ENCODE measurements at regions of chr2 and their contacts with region 1.

Region 1: DNA sequence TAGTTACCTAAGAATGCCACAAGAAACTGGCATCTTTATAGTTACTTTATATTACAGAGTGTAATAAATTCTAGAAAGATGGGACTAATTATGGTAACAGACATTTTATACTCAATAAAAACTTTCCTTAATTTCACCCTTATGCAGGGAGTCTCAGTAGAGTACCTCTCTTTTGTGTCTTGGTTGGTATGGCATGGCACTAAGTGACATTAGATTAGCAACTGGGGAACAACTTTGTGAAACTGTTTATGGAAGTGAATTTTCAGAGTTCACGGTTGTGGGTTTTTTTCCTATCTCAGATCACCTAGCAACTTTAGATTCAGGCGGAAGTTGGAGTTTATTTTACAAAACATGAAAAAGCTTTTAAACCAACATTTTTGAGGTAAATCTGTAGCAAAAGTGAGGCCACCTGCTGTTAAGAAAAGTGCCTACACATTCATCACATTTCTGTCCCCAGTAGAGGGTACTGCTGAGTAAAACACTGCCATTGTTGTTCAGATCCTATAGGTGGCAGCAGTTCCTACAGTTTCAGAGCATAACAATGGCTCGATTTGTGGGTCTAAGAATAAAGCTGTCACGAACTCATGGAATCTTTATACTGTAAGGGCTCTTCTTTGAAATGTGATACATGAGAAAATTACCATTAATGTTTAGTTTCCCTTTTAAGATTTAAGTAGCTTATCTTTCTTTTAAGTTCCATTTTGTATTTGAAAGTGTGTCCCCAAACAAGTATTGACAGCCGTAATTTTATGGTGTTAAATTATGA is 117.6 kb downstream of the CAMKMT start:
- DNase-seq: peak; percentile 86
- H3K4me3 Mint-ChIP-seq: no peak overlapping the region
- H3K27ac Mint-ChIP-seq: no peak overlapping the region
- H3K4me1 Mint-ChIP-seq: no peaks in the 10 kb centered on the region
- H3K27me3 Mint-ChIP-seq: no peaks in the 10 kb centered on the region
- CTCF ChIP-seq: peak; percentile 99

Region 2: DNA sequence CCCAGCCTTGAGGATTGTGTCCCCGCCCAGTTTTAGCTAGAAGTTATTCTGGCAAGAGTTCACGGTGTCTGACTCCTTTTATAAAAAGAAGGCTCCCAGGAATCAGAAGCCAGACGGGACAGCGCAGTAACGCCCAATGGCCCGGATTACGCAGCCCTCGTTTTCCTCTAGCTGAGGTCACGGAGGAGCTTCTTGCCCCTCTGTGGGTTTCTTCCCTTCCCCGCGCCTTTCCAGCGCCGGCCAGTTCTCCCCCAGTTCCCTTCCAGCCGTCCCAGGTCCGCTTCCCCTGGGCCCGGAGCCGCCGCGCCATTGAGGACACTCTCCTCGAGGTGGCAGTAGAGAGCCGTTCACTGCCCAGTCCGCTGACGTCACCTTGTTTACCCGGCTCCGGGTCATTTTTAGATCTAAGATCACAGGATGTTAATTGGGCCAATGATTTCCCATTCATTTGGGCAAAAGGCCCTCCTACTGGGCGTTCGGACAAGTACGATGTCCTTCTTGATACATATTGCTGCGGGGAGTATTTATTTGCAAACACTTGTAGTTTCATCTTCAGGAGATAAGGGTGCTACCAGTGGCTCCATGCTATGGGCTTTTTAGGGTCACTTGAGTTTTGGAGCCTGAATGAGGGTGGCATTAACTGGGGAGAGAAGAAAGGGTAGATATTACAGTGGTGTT is 392.1 kb before region 1 on chr2:
- CTCF ChIA-PET with region 1: interaction called, 4 read pairs
- POLR2A ChIA-PET with region 1: no interaction called
- intact Hi-C with region 1: loop called (anchors 2 kb)
- DNase-seq: peak; percentile 78
- H3K4me3 Mint-ChIP-seq: peak overlapping the region; percentile 61
- H3K27ac Mint-ChIP-seq: peak overlapping the region; percentile 46
- H3K4me1 Mint-ChIP-seq: peaks cover 5% of the 10 kb centered on the region
- H3K27me3 Mint-ChIP-seq: no peaks in the 10 kb centered on the region
- CTCF ChIP-seq: peak; percentile 89

Region 3: DNA sequence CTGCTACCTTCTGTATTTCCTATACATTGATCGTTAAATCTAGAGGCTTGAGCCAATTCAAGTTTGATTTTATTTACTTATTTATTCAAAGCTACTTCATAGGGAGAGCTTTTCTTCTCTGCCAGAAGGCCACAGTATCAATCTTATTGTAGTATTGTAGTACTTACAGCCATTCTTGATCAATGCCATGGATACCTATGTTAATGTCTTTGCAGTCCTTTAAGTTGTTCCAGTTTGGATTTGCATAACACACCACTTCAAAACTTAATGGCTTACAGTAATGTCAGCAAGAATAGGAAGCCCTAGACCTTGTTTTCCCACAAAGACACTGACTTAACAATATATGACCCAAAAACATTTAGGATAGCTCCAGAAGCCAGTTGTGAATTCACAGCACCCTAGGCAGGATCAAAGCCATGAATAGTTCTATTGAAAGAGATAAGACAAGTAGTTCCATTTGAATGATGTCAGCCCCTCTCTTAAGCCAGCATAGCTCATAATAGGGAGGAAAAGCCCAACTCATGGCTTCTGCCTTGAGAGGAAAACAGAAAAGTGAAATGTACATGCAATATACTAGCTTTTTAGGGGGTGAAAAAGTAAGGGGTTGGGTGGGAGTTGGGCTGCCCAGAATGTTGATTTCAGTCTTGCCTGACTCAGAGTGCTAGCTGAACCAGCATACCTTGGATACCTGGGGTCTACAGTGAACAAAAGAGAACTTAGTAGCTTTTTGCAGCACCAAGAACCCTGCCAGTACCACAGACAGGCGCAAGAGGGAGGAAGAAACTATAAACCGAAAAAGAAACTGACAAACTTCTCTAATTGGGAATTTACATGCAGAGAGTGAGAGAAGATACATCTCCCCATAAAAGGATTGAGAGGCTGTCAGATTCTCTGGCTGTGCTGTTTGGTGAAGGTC is 16.1 kb before region 1 on chr2:
- CTCF ChIA-PET with region 1: interaction called, 32 read pairs
- POLR2A ChIA-PET with region 1: no interaction called
- intact Hi-C with region 1: no loop called
- DNase-seq: no peak
- H3K4me3 Mint-ChIP-seq: no peak overlapping the region
- H3K27ac Mint-ChIP-seq: no peak overlapping the region
- H3K4me1 Mint-ChIP-seq: no peaks in the 10 kb centered on the region
- H3K27me3 Mint-ChIP-seq: no peaks in the 10 kb centered on the region
- CTCF ChIP-seq: no peak

Region 4: GRCh38 chr2:44549095-44549463 is 69.8 kb after region 1 on chr2:
- CTCF ChIA-PET with region 1: interaction called, 6 read pairs
- POLR2A ChIA-PET with region 1: no interaction called
- intact Hi-C with region 1: loop called (anchors 10 kb)
- DNase-seq: peak; percentile 90
- H3K4me3 Mint-ChIP-seq: peak overlapping the region; percentile 57
- H3K27ac Mint-ChIP-seq: peak overlapping the region; percentile 93
- H3K4me1 Mint-ChIP-seq: peaks cover 69% of the 10 kb centered on the region
- H3K27me3 Mint-ChIP-seq: no peaks in the 10 kb centered on the region
- CTCF ChIP-seq: no peak

Region 5: DNA sequence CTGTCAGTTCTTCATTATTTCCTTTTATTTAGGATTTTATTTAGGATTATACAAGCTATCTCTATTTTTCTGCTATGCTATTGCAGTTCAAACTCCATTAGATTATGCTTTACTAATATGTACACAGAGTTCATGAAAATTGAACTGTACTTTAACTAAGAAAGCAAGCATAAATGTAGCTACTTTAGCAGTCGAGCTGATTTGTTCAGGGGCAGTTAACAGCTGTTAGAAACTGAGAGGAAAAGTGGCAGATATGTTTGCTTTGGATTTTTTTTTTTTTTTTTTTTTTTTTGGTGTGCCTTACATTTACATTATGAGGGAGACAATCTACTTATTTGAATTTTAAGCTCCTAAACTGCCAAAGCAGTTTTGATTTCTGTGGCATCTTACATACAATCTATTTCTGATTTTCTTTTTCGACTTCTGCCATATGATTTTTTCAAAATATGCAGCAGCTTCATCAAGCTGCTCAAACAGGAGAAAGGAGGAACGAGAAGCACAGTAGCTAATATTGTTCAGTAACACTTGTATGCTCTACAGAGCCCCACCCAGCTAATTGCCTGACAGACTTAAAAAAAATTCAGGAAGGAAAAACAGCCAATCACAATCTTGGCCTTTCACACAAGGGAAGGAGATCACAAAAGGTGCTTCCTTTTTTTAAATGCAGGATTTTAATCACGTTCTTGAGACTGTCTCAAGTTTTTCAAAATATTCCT is 228.8 kb after region 1 on chr2:
- CTCF ChIA-PET with region 1: interaction called, 76 read pairs
- POLR2A ChIA-PET with region 1: interaction called, 3 read pairs
- intact Hi-C with region 1: no loop called
- DNase-seq: peak; percentile 30
- H3K4me3 Mint-ChIP-seq: no peak overlapping the region
- H3K27ac Mint-ChIP-seq: no peak overlapping the region
- H3K4me1 Mint-ChIP-seq: peaks cover 8% of the 10 kb centered on the region
- H3K27me3 Mint-ChIP-seq: no peaks in the 10 kb centered on the region
- CTCF ChIP-seq: no peak

Region 6: DNA sequence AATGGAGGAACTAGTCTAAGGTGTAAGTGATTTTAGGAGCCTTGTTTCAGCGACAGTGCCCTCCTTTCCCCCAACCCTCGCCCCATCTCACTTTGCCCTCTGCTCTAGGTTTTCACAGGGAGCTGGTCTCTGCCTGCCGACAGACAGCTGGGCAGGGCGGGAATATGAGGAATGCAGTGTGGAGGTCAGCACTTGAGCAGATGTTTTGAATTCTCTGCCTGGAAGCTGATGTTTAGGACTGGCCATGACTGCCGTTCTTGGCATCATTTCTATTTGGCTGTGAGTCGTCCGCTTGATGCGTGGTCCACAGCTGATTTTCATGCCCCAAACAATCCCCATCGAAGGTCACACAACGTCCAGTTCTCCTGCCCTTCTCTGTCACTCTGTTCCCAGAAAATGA is 407.1 kb after region 1 on chr2:
- CTCF ChIA-PET with region 1: no interaction called
- POLR2A ChIA-PET with region 1: no interaction called
- intact Hi-C with region 1: no loop called
- DNase-seq: no peak
- H3K4me3 Mint-ChIP-seq: no peak overlapping the region
- H3K27ac Mint-ChIP-seq: no peak overlapping the region
- H3K4me1 Mint-ChIP-seq: no peaks in the 10 kb centered on the region
- H3K27me3 Mint-ChIP-seq: no peaks in the 10 kb centered on the region
- CTCF ChIP-seq: no peak

Region 7: GRCh38 chr2:44955593-44956392 is 476.5 kb after region 1 on chr2:
- CTCF ChIA-PET with region 1: interaction called, 139 read pairs
- POLR2A ChIA-PET with region 1: no interaction called
- intact Hi-C with region 1: loop called (anchors 1 kb)
- DNase-seq: peak; percentile 69
- H3K4me3 Mint-ChIP-seq: peak overlapping the region; percentile 69
- H3K27ac Mint-ChIP-seq: no peak overlapping the region
- H3K4me1 Mint-ChIP-seq: peaks cover 21% of the 10 kb centered on the region
- H3K27me3 Mint-ChIP-seq: peaks cover 38% of the 10 kb centered on the region
- CTCF ChIP-seq: peak; percentile 98

Region 8: DNA sequence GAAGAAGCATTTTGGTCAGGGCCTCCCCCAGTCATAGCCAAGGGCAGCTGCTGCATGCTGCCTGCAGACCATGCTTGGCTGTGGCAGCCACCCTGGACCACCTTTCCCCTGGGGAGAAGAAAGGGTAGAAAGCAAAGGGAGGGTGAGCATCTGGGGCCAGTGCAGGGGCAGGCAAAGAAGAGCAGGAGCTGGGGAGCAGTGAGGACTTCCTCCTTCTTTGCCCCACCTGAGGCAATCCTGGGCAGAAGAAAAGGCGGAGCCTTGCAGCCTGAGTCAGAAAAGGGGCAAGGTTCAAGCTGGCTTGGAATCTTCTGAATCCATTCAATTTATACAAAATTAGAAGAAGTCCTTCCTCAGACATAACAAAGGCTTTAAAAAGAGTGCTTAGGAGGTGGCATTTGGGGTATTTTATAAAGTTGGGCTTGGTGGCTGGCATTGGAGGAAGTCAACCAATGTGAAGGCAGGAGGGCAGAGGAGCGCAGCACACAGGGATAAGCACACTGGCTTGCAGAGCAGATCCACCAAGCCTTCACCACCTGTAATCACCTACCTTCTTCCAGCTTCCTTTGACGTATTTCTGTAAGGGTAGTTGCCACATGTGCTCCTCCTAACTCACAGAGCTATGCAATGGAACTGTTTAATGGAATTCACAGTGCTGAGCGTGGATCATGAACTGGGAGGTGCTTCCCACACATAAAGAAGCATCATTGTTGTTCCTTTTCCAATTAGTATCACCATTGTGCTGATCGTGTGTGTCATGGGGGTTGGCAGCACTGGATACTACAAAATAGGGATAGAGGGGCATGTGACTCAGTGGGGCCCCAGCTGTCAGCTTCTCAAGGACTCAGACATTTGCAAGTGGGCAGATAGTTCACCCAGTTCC is 1663.5 kb after region 1 on chr2:
- CTCF ChIA-PET with region 1: no interaction called
- POLR2A ChIA-PET with region 1: no interaction called
- intact Hi-C with region 1: no loop called
- DNase-seq: peak; percentile 38
- H3K4me3 Mint-ChIP-seq: no peak overlapping the region
- H3K27ac Mint-ChIP-seq: no peak overlapping the region
- H3K4me1 Mint-ChIP-seq: peaks cover 9% of the 10 kb centered on the region
- H3K27me3 Mint-ChIP-seq: no peaks in the 10 kb centered on the region
- CTCF ChIP-seq: no peak

Measured in MCF 10A (cell line).